MCF 10A (cell line): ENCODE measurements at regions of chr22 and their contacts with region 1.

Region 1: GRCh38 chr22:36017651-36018091 is 11.0 kb downstream of the RBFOX2 start:
- DNase-seq: no peak
- H3K4me3 Mint-ChIP-seq: no peak overlapping the region
- H3K27ac Mint-ChIP-seq: no peak overlapping the region
- H3K4me1 Mint-ChIP-seq: peaks cover 11% of the 10 kb centered on the region
- H3K27me3 Mint-ChIP-seq: no peaks in the 10 kb centered on the region
- CTCF ChIP-seq: no peak

Region 2: DNA sequence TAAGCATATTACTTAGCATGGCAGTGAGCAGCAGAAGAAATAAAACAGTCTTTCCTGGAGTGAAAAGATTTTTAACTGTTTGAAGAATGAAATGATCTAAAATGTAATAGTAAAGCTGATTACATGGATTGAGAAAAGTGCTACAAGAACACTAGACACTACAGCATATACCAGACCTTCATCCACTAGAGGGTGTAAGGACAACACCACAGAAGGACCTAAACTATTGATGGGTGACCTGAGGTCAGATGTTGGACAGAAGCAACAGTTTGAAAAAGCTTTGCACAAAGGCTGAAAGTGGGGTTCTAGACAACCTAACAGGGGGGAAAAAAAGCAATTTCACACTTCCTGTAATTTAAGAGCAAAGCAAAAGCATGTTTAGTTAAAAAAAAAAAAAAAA is 86.7 kb before region 1 on chr22:
- CTCF ChIA-PET with region 1: interaction called, 12 read pairs
- POLR2A ChIA-PET with region 1: no interaction called
- intact Hi-C with region 1: no loop called
- DNase-seq: peak; percentile 63
- H3K4me3 Mint-ChIP-seq: no peak overlapping the region
- H3K27ac Mint-ChIP-seq: peak overlapping the region; percentile 21
- H3K4me1 Mint-ChIP-seq: no peaks in the 10 kb centered on the region
- H3K27me3 Mint-ChIP-seq: no peaks in the 10 kb centered on the region
- CTCF ChIP-seq: peak; percentile 54